ENCODE measurements at regions of chr3 and their contacts with region 1.

Region 1: DNA sequence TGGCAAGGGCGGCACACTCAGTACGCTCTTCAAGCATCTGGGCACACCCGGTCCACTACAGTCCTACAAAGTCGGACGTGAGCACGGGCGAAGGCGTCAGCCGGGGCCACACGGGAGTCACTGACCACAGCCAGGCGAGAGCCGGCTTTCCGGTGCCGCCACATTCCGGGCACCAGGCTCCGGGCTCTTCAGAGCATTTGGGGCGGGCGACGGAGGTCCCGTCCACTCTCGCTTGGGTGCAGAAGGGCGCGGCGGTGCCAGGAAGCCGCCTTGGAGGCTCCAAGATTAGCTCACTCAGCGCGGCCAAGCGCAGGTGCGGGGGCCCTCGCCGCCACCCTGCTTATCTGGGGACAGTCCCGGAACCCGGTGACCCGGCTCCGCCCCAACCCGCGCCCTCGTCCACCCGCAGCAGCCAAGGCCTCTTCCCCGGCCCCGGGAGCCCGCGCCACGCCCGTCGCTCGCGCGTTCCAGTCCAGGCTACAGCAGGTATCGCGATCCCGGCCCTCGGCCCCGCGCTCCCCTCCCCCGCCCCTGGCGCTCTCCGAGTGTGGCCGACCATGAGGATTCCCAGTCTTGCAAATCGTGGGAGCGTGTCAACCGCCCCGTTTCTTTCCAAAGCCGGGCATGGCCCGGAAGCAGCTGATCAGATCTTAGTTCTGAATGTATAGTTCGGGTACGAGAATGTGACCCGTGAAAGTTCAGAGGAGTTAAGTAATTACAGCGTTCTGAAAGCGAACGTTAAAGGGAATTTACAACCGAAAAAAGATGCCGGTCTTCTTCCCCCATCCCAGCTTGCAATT is at the start of gene ADPRH:
- DNase-seq: peak; percentile 94
- total RNA-seq, gene ADPRH: 15.3 to 17.9 TPM

Region 2: GRCh38 chr3:118447339-118447738 is 1132.2 kb before region 1 on chr3:
- intact Hi-C with region 1: no loop called
- DNase-seq: no peak

Region 3: GRCh38 chr3:119662604-119663373 is 83.2 kb after region 1 on chr3:
- intact Hi-C with region 1: loop called in 1 of 2 experiments (anchors 10 kb)
- DNase-seq: no peak

Region 4: DNA sequence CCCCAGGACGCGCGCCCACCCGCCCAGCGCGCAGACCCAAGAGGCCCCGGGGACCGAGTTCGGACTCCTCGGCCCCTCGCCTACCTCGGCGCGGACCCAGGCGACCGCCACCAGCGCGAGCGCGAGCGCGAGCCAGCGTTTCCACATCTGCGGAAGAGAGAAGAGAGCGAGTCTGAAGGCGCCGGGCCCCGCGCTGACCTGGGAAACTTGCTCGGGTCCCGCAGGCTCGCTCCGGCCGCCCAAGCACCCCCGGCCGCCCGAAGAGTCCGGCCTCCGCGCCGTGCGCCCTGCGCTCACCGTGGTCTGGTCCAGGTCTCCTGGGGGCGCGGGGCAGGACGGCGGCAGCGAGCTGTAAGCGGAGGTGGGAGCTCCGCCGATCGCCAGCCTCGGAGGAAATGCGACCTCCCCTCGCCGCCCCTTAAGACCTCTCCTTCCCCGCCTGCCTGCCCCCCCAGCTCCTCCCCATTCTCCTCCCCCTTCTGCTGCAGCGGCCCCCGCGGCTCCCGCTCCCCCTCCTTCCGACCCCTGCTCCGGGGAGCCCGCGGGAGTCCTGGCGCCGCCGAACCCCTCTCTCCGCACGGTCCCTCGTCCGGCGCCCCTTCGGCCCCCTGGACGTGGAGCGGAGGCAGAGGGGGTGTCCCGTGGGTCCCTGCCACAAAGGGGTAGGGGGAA is 871.2 kb after region 1 on chr3 and contains the start of gene FSTL1:
- intact Hi-C with region 1: no loop called
- DNase-seq: peak; percentile 90
- total RNA-seq, gene FSTL1: 548 to 1,310 TPM